Activated naive CD4-positive, alpha-beta T cell treated with anti-CD3 and anti-CD28 coated beads, Interleukin-2, amount 10 ng/mL, durations not matched to agents 7 days and 5 days (primary cell): ENCODE measurements at regions of chr3 and their contacts with region 1.

Region 1: GRCh38 chr3:15427182-15427880 is at the starts of genes EAF1 and METTL6:
- DNase-seq: peak; percentile 91
- H3K4me3 Mint-ChIP-seq: peak within 1 kb of the TSS; percentile 93
- H3K27ac Mint-ChIP-seq: peak within 1 kb of the TSS; percentile 88
- H3K4me1 Mint-ChIP-seq: peaks cover 50% of the 10 kb centered on the region
- H3K27me3 Mint-ChIP-seq: no peaks in the 10 kb centered on the region

Region 2: GRCh38 chr3:15159501-15160136 is 267.7 kb before region 1 on chr3:
- CTCF ChIA-PET with region 1: no interaction called
- DNase-seq: no peak
- H3K4me3 Mint-ChIP-seq: no peak overlapping the region
- H3K27ac Mint-ChIP-seq: no peak overlapping the region
- H3K4me1 Mint-ChIP-seq: no peaks in the 10 kb centered on the region
- H3K27me3 Mint-ChIP-seq: peaks cover 21% of the 10 kb centered on the region

Region 3: GRCh38 chr3:15557511-15557946 is 130.2 kb after region 1 on chr3:
- CTCF ChIA-PET with region 1: interaction called, 13 read pairs
- DNase-seq: peak; percentile 83
- H3K4me3 Mint-ChIP-seq: no peak overlapping the region
- H3K27ac Mint-ChIP-seq: peak overlapping the region; percentile 68
- H3K4me1 Mint-ChIP-seq: peaks cover 42% of the 10 kb centered on the region
- H3K27me3 Mint-ChIP-seq: no peaks in the 10 kb centered on the region

Region 4: DNA sequence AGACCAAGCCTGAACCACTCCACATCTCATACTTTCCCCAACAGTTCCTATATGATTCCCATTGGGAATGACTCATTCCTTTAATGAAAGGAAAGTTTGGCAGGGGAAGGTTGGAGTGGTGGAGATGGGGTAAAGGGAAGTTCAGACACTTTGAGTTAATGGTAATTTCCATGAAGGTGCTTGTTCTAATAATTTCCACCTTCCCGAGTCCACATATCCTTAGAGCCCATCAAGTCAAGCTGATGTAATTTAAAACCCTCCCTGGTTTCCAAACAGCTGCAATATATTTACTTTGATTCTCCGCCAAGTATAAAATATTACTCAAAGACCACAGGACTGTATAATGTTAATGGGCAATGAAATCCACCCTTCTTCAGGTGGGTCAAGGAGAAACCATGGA is 652.2 kb after region 1 on chr3:
- CTCF ChIA-PET with region 1: no interaction called
- DNase-seq: no peak
- H3K4me3 Mint-ChIP-seq: no peak overlapping the region
- H3K27ac Mint-ChIP-seq: no peak overlapping the region
- H3K4me1 Mint-ChIP-seq: no peaks in the 10 kb centered on the region
- H3K27me3 Mint-ChIP-seq: peaks cover 4% of the 10 kb centered on the region